Activated naive CD4-positive, alpha-beta T cell treated with anti-CD3 and anti-CD28 coated beads for 36 hours (primary cell): ENCODE measurements at regions of chr5 and their contacts with region 1.

Region 1: DNA sequence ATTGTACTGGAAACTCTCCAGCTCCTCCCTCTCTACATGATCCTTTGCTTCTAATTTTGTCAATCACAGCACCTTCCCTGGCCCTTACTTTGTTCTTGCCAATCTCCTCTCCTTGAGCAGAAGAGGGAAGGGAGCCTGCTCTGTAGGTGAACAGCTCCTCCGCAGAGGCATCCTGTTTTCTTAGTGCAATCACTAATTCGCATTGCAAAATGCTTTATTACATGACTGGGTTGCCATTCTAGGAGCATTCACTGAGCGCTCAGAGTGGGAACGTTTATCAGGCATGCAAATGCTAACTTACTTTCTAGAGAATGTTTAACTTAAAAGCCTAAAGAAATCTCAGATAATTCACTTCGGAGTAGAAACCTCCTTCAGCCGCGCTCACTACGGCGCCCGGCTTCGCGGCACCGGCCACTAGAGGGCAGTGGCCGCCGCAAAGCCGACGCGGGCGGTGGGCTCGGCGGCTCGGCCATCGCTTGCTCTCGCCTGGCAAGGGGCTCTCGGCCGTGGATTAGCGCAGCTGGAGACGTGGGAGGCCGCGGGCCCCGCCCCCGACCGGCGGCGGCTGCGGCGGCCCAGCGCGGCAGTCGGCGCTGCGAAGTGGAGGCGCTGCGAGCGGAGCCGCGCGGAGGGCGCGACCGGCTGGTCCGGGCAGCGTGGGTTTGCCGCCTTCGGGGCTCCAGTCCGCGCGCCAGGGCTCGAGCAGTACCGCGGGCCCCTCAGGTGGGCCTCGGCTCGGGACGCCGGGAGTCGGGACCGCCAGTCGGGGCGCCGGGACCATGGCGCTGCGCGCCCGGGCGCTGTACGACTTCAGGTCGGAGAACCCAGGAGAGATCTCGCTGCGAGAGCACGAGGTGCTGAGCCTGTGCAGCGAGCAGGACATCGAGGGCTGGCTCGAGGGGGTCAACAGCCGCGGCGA is at the start of gene SNX18:
- DNase-seq: peak; percentile 91
- H3K4me3 Mint-ChIP-seq: peak within 1 kb of the TSS; percentile 56
- H3K27ac Mint-ChIP-seq: no peak within 1 kb of the TSS
- H3K4me1 Mint-ChIP-seq: peaks cover 38% of the 10 kb centered on the region
- H3K27me3 Mint-ChIP-seq: no peaks in the 10 kb centered on the region
- total RNA-seq, gene SNX18: 3.9 to 4.4 TPM

Region 2: GRCh38 chr5:54743997-54744788 is 226.8 kb after region 1 on chr5:
- CTCF ChIA-PET with region 1: interaction called, 3 read pairs
- intact Hi-C with region 1: loop called (anchors 1 kb)
- DNase-seq: peak; percentile 66
- H3K4me3 Mint-ChIP-seq: no peak overlapping the region
- H3K27ac Mint-ChIP-seq: peak overlapping the region; percentile 54
- H3K4me1 Mint-ChIP-seq: peaks cover 11% of the 10 kb centered on the region
- H3K27me3 Mint-ChIP-seq: no peaks in the 10 kb centered on the region

Region 3: DNA sequence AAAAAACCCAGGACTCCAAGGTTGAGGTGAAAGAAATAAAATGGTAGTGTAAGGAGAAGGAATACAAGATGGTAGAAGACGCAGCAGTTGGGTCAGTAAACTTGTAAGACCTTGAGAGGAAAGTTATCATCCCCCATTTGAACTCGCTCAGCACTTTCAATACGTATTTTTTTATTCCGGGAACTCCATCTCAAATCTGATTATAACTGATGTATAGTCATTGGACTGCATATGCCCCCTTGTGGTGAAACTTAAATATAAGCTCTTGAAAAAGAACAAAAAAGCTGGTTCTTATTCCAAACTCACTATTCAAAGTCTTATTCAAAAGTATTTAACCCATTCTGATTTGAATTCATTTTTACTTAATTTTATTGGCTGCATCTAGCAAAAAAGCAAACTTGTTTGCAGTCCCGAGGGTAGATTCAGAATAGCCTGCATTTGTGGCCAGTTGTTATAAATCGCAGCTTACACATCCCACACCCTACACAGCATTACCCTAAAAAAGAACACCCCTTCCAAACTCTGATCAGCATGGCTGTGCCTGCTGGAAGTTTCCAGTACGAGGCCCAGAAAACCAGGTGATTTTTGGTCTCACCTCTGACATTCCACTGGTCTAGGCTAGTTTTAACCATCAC is 350.0 kb after region 1 on chr5:
- CTCF ChIA-PET with region 1: interaction called, 48 read pairs
- intact Hi-C with region 1: loop called (anchors 1 kb)
- DNase-seq: no peak
- H3K4me3 Mint-ChIP-seq: no peak overlapping the region
- H3K27ac Mint-ChIP-seq: no peak overlapping the region
- H3K4me1 Mint-ChIP-seq: peaks cover 16% of the 10 kb centered on the region
- H3K27me3 Mint-ChIP-seq: peaks cover 11% of the 10 kb centered on the region

Region 4: GRCh38 chr5:55146543-55147151 is 629.2 kb after region 1 on chr5:
- CTCF ChIA-PET with region 1: no interaction called
- intact Hi-C with region 1: loop called (anchors 1 kb)
- DNase-seq: peak; percentile 90
- H3K4me3 Mint-ChIP-seq: no peak overlapping the region
- H3K27ac Mint-ChIP-seq: no peak overlapping the region
- H3K4me1 Mint-ChIP-seq: peaks cover 12% of the 10 kb centered on the region
- H3K27me3 Mint-ChIP-seq: peaks cover 4% of the 10 kb centered on the region

Region 5: GRCh38 chr5:55232985-55233928 is 715.8 kb after region 1 on chr5 and contains the start of gene CCNO:
- CTCF ChIA-PET with region 1: no interaction called
- intact Hi-C with region 1: loop called (anchors 5 kb)
- DNase-seq: peak; percentile 63
- H3K4me3 Mint-ChIP-seq: peak within 1 kb of the TSS; percentile 76
- H3K27ac Mint-ChIP-seq: no peak within 1 kb of the TSS
- H3K4me1 Mint-ChIP-seq: peaks cover 32% of the 10 kb centered on the region
- H3K27me3 Mint-ChIP-seq: peaks cover 69% of the 10 kb centered on the region
- total RNA-seq, gene CCNO: not detected